ENCODE measurements at regions of chr6 and their contacts with region 1.

Region 1: DNA sequence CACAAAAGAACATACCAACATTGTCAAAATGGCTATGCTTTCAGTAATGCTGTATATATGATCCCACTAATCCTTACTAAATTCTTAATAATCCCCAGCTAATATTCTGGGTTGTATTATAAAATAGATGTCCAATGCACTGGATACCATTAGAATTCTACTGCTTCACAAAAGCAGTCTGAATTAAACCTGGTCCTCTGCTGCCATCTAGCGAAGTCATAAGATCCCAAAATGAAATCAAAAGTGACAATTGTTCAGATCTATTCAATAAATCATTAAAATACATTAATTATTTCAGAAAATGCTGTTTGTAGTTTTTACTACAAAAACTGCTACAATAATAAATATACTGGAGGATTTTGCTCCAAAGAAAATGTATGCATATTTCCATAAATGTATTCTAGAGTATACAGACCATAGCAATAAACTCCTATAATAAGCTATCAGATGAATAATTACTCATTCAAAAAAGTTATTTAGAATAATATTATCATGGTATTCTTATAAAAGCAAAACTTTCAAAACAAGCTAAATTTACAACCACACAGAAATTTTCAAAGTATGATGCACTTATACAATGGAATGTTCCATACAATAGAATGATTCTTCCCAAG is 92.6 kb downstream of the RNGTT start:
- DNase-seq: no peak
- H3K4me3 ChIP-seq: no peak overlapping the region
- H3K27ac ChIP-seq: no peak overlapping the region
- H3K4me1 ChIP-seq: no peaks in the 10 kb centered on the region
- H3K27me3 ChIP-seq: no peaks in the 10 kb centered on the region
- CTCF ChIP-seq: peak in 2 of 3 experiments; percentile 33 to 39; a peak in 2 of 4 replicates
- EP300 ChIP-seq: no peak
- POLR2A ChIP-seq: no peak
- RAD21 ChIP-seq: peak; percentile 79 to 80

Region 2: DNA sequence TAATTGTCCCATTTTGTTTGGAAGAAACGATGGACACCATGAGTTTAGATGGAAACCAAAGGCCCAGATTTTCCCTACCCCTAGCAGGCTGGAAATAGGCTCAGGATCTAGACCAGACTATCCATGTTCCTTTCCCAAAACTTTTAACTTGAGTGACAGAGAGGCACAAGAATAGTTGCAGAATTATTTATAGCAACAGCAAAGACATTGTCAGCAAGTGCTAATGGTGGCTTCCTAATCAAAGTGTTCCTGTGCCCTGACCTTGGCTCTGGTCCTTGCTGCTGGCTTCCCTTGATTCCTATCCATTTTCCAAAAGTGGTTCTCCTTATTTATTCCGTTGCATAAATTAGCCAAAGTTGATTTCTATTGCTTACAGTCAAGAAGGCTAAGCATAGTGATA is 10.5 kb before region 1 on chr6:
- CTCF ChIA-PET with region 1: interaction called, 15 read pairs
- POLR2A ChIA-PET with region 1: no interaction called
- DNase-seq: no peak
- H3K4me3 ChIP-seq: no peak overlapping the region
- H3K27ac ChIP-seq: no peak overlapping the region
- H3K4me1 ChIP-seq: no peaks in the 10 kb centered on the region
- H3K27me3 ChIP-seq: no peaks in the 10 kb centered on the region
- CTCF ChIP-seq: no peak
- EP300 ChIP-seq: no peak
- POLR2A ChIP-seq: no peak
- RAD21 ChIP-seq: no peak

Region 3: DNA sequence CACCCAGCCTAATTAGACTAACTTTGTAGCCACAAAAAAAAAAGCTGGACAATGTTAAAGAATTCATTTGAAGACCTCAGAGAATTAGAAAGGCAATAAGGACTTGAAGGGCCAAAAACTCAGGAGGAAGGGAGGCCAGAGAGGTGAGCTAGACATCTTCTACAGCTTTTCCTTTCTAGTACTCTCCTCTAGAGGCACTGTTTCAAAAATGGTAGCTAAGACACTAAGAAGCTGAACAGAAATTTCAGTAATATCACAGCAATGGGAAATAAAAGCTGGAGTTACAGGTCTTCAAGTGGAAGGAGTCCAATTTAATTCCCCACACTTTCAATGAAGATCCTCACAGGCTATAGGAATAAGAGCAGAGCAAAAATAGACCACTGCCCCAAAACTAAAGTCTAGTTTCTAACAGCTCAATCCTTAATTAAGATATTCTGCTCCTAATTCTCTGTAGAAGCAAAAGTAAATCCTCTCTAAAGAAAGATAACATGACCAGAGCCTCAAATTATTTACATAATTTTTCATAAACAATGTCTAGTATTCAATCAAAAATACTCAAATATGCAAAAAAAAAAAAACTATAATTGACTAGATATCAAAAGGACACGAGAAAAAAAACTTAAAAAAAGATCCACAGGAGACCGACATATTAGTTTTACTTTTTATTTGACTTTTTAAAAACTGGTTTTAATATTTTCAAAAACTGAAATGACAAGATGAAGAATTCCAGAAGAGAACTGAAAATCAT is 28.9 kb after region 1 on chr6:
- CTCF ChIA-PET with region 1: interaction called, 10 read pairs
- POLR2A ChIA-PET with region 1: no interaction called
- DNase-seq: no peak
- H3K4me3 ChIP-seq: no peak overlapping the region
- H3K27ac ChIP-seq: no peak overlapping the region
- H3K4me1 ChIP-seq: peaks cover 0 to 3% (median 0%) of the 10 kb centered on the region in 4 experiments; a peak in 1 of 7 replicates
- H3K27me3 ChIP-seq: no peaks in the 10 kb centered on the region
- CTCF ChIP-seq: peak in 1 of 3 experiments; percentile 49; a peak in 1 of 4 replicates
- EP300 ChIP-seq: no peak
- POLR2A ChIP-seq: no peak
- RAD21 ChIP-seq: no peak

Measured in H1 (cell line).